GM12878 (cell line): ENCODE measurements at regions of chr18 and their contacts with region 1.

Region 1: GRCh38 chr18:57621246-57621604 is 411 bp downstream of the NARS1 start:
- DNase-seq: no peak
- ATAC-seq: peak; percentile 55
- H3K4me3 ChIP-seq: peak overlapping the region; percentile 99
- H3K27ac ChIP-seq: peak overlapping the region; percentile 87
- H3K4me1 ChIP-seq: no peaks in the 10 kb centered on the region; the same call in 1 of the 2 replicates
- H3K27me3 ChIP-seq: no peaks in the 10 kb centered on the region
- CTCF ChIP-seq: no peak
- EP300 ChIP-seq: no peak
- POLR2A ChIP-seq: no peak
- RAD21 ChIP-seq: no peak

Region 2: GRCh38 chr18:57644540-57644939 is 23.3 kb after region 1 on chr18:
- CTCF ChIA-PET with region 1: no interaction called
- POLR2A ChIA-PET with region 1: interaction called, 11 read pairs
- RAD21 ChIA-PET with region 1: no interaction called
- SMC1A ChIA-PET with region 1: no interaction called
- in situ Hi-C with region 1: no loop called
- intact Hi-C with region 1: no loop called
- DNase-seq: no peak
- ATAC-seq: no peak
- H3K4me3 ChIP-seq: no peak overlapping the region
- H3K27ac ChIP-seq: no peak overlapping the region
- H3K4me1 ChIP-seq: peaks cover 3% of the 10 kb centered on the region
- H3K27me3 ChIP-seq: no peaks in the 10 kb centered on the region
- CTCF ChIP-seq: no peak; a peak in 1 of 6 replicates
- EP300 ChIP-seq: no peak
- POLR2A ChIP-seq: no peak
- RAD21 ChIP-seq: no peak

Region 3: DNA sequence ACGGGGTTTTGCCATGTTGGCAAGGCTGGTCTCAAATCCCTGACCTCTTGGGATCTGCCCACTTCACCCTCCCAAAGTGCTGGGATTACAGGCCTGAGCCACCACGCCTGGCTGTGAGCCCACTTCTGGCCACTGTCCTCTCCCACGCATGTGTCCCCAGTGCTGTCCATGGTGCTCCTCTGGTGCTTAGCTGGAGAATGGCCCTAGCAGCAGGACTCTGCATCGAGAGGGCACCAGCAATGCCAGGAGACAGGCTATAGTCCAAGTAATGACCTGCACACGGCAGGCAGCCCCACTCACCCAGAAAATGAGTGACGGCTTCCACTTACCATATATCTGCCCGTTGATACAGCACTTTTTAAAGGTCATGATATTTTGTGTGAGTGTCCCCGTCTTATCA is 66.7 kb after region 1 on chr18:
- CTCF ChIA-PET with region 1: no interaction called
- POLR2A ChIA-PET with region 1: no interaction called
- RAD21 ChIA-PET with region 1: no interaction called
- SMC1A ChIA-PET with region 1: no interaction called
- in situ Hi-C with region 1: no loop called
- intact Hi-C with region 1: no loop called
- DNase-seq: no peak
- ATAC-seq: no peak
- H3K4me3 ChIP-seq: no peak overlapping the region
- H3K27ac ChIP-seq: no peak overlapping the region
- H3K4me1 ChIP-seq: no peaks in the 10 kb centered on the region
- H3K27me3 ChIP-seq: no peaks in the 10 kb centered on the region
- CTCF ChIP-seq: no peak
- EP300 ChIP-seq: no peak
- POLR2A ChIP-seq: no peak
- RAD21 ChIP-seq: no peak

Region 4: DNA sequence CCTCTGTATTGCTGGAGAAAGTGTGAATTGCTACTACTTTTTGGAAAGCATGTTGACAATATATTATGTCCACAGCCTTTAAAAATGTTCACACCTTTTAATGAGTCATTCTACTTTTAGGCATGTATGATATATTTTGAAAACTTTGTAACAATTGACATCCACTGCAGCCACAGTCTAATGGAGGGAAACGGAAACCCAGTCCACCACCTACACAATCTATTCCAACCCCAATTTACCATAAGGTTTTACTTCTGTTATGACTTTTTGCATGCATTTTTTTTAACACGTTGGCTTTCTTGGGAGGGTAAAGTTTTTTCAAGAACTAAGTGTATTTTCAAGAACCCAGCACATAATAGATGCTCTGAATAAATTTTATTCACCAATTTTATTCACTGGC is 220.3 kb after region 1 on chr18:
- CTCF ChIA-PET with region 1: no interaction called
- POLR2A ChIA-PET with region 1: no interaction called
- RAD21 ChIA-PET with region 1: no interaction called
- SMC1A ChIA-PET with region 1: no interaction called
- in situ Hi-C with region 1: loop called (anchors 25 kb)
- intact Hi-C with region 1: loop called (anchors 5 kb)
- DNase-seq: peak; percentile 79
- ATAC-seq: peak; percentile 61
- H3K4me3 ChIP-seq: no peak overlapping the region
- H3K27ac ChIP-seq: no peak overlapping the region
- H3K4me1 ChIP-seq: peaks cover 26% of the 10 kb centered on the region
- H3K27me3 ChIP-seq: peaks cover 0 to 4% of the 10 kb centered on the region in 2 experiments; a peak in 3 of 4 replicates
- CTCF ChIP-seq: no peak
- EP300 ChIP-seq: peak; percentile 91 to 94
- POLR2A ChIP-seq: no peak
- RAD21 ChIP-seq: no peak

Region 5: GRCh38 chr18:58362027-58362575 is 740.9 kb after region 1 on chr18:
- CTCF ChIA-PET with region 1: no interaction called
- POLR2A ChIA-PET with region 1: no interaction called
- RAD21 ChIA-PET with region 1: no interaction called
- SMC1A ChIA-PET with region 1: no interaction called
- in situ Hi-C with region 1: no loop called
- intact Hi-C with region 1: no loop called
- DNase-seq: no peak
- ATAC-seq: no peak
- H3K4me3 ChIP-seq: no peak overlapping the region
- H3K27ac ChIP-seq: no peak overlapping the region
- H3K4me1 ChIP-seq: no peaks in the 10 kb centered on the region
- H3K27me3 ChIP-seq: no peaks in the 10 kb centered on the region
- CTCF ChIP-seq: no peak
- EP300 ChIP-seq: no peak
- POLR2A ChIP-seq: no peak
- RAD21 ChIP-seq: no peak